Ovary (tissue), 10 donors: ENCODE measurements at regions of chr12 and their contacts with region 1.

Region 1: DNA sequence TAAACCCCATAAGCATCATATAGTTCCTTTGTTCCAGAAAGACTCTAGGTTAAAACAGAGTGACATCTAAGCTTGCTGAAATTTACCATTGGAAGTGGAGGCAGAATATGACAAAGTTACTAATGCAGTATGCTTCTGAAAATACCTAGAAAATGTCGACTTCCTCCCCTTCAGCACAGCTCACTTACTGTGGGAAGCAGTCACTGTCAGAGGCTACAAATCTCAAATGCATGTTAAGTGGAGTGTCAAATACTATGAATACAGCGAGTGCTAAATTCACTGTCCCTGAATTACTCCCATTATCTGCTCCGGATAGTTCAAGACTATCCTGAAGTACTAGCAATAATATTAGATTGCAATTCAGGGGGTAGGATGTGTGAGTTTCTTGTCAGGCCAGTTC is 1454.6 kb downstream of the AACS start:
- DNase-seq: no peak
- H3K4me3 ChIP-seq: no peak overlapping the region
- H3K27ac ChIP-seq: no peak overlapping the region
- H3K4me1 ChIP-seq: no peaks in the 10 kb centered on the region
- H3K27me3 ChIP-seq: no peaks in the 10 kb centered on the region
- CTCF ChIP-seq: no peak
- EP300 ChIP-seq: no peak
- POLR2A ChIP-seq: no peak

Region 2: GRCh38 chr12:126233625-126234024 is 286.2 kb before region 1 on chr12:
- intact Hi-C with region 1: loop called in 1 of 4 experiments (anchors 5 kb)
- DNase-seq: no peak
- H3K4me3 ChIP-seq: no peak overlapping the region
- H3K27ac ChIP-seq: no peak overlapping the region
- H3K4me1 ChIP-seq: no peaks in the 10 kb centered on the region
- H3K27me3 ChIP-seq: no peaks in the 10 kb centered on the region
- CTCF ChIP-seq: no peak
- EP300 ChIP-seq: no peak
- POLR2A ChIP-seq: no peak

Region 3: GRCh38 chr12:127230843-127231260 is 711.0 kb after region 1 on chr12:
- intact Hi-C with region 1: no loop called
- DNase-seq: no peak
- H3K4me3 ChIP-seq: no peak overlapping the region
- H3K27ac ChIP-seq: no peak overlapping the region
- H3K4me1 ChIP-seq: no peaks in the 10 kb centered on the region
- H3K27me3 ChIP-seq: no peaks in the 10 kb centered on the region
- CTCF ChIP-seq: no peak
- EP300 ChIP-seq: no peak
- POLR2A ChIP-seq: no peak